Dendritic cell treated with granulocyte-macrophage colony-stimulating factor and Interleukin-4, amounts not matched to agents 40 ng/mL and 50 ng/mL, for 4 days (primary cell): ENCODE measurements at regions of chr15 and their contacts with region 1.

Region 1: GRCh38 chr15:73964736-73965093 is 27.4 kb downstream of the STOML1 start:
- H3K4me3 Mint-ChIP-seq: peak overlapping the region; percentile 34
- H3K27ac Mint-ChIP-seq: peak overlapping the region; percentile 24
- H3K4me1 Mint-ChIP-seq: peaks cover 15% of the 10 kb centered on the region
- H3K27me3 Mint-ChIP-seq: peaks cover 4% of the 10 kb centered on the region

Region 2: DNA sequence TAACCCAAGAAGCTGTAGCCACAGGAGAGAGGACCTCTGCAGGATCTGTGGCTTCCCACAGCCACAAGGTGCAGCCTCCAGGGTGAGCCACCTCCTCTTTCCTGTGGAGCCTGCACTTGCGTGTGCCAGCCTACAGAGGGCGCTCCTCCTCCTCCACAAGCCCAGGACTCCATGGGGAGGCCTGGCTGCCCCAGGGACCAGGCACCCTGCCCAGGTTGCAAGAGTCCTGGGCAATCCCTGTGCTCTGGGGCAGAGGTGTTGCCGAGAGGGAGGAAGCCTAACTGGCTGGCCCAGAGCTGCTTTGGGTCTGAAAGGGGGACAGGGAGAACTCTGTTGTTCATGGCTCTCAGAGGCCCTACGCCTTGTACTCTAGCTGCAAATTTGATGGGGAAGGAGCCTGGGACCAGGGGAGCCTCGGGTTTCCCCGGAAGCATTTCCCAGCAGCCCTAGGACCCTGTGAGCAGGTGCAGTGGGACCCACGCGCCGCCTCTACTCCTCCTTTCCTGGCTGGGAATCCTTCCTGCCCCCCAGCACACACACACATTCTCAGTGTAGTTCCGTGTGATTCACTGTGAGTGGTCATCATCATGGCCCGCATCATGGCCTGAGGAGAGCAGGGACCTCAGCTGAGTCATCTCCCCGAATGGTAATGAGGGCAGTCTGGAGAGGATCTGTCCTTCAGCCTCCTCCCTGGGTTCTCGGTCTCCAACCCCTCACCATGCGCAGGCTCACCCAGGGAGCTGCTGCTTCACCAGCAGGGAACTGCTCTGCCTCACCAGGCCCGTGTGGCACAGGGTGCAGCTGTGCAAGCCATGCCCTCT is 67.1 kb before region 1 on chr15:
- intact Hi-C with region 1: loop called (anchors 2 kb)
- H3K4me3 Mint-ChIP-seq: no peak overlapping the region
- H3K27ac Mint-ChIP-seq: no peak overlapping the region
- H3K4me1 Mint-ChIP-seq: no peaks in the 10 kb centered on the region
- H3K27me3 Mint-ChIP-seq: peaks cover 2% of the 10 kb centered on the region

Region 3: GRCh38 chr15:73950831-73951561 is 13.7 kb before region 1 on chr15:
- intact Hi-C with region 1: loop called (anchors 1 kb)
- H3K4me3 Mint-ChIP-seq: no peak overlapping the region
- H3K27ac Mint-ChIP-seq: peak overlapping the region; percentile 64
- H3K4me1 Mint-ChIP-seq: peaks cover 14% of the 10 kb centered on the region
- H3K27me3 Mint-ChIP-seq: peaks cover 10% of the 10 kb centered on the region